MCF 10A (cell line): ENCODE measurements at regions of chr10 and their contacts with region 1.

Region 1: GRCh38 chr10:48656241-48656913 is 28.3 kb upstream of the WDFY4 start:
- DNase-seq: peak; percentile 88
- H3K4me3 Mint-ChIP-seq: peak overlapping the region; percentile 73
- H3K27ac Mint-ChIP-seq: no peak overlapping the region
- H3K4me1 Mint-ChIP-seq: peaks cover 13% of the 10 kb centered on the region
- H3K27me3 Mint-ChIP-seq: peaks cover 58% of the 10 kb centered on the region
- CTCF ChIP-seq: peak; percentile 98

Region 2: DNA sequence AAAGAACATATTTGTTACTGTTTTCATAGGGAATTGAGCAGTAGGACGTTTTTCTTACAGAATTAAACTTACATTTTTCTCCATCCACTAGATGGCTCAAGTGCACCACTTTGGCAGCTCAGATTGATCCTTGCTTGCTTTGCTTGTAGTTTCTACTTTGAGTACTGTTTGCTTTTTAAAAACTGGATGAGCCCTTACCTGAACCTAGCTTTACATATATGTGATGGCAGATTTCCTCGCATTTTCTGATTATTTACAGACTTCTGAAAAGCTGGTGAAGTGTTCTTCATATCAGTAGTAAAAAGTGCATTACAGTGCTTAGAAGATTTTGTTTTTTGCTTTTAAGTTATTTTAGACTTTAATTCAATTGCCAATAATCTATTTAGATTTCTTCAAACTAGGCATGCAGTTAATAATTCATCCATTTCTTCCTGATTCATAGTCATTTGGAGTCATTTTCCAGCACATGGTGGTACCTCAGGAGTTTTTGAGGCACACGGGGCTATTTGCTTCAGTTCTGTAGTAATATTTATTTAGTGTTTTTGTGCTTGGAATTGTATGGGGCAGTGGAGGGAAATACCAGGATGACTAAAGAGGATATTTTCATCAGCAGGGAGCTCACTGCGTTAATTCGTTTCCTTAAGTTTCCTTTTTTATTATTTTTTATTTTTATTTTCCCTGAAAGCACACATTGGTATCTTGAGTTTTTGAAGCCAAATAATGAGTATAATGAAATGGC is 292.6 kb before region 1 on chr10:
- CTCF ChIA-PET with region 1: interaction called, 44 read pairs
- POLR2A ChIA-PET with region 1: interaction called, 7 read pairs
- intact Hi-C with region 1: no loop called
- DNase-seq: peak; percentile 79
- H3K4me3 Mint-ChIP-seq: peak overlapping the region; percentile 2
- H3K27ac Mint-ChIP-seq: no peak overlapping the region
- H3K4me1 Mint-ChIP-seq: peaks cover 23% of the 10 kb centered on the region
- H3K27me3 Mint-ChIP-seq: no peaks in the 10 kb centered on the region
- CTCF ChIP-seq: peak; percentile 72

Region 3: DNA sequence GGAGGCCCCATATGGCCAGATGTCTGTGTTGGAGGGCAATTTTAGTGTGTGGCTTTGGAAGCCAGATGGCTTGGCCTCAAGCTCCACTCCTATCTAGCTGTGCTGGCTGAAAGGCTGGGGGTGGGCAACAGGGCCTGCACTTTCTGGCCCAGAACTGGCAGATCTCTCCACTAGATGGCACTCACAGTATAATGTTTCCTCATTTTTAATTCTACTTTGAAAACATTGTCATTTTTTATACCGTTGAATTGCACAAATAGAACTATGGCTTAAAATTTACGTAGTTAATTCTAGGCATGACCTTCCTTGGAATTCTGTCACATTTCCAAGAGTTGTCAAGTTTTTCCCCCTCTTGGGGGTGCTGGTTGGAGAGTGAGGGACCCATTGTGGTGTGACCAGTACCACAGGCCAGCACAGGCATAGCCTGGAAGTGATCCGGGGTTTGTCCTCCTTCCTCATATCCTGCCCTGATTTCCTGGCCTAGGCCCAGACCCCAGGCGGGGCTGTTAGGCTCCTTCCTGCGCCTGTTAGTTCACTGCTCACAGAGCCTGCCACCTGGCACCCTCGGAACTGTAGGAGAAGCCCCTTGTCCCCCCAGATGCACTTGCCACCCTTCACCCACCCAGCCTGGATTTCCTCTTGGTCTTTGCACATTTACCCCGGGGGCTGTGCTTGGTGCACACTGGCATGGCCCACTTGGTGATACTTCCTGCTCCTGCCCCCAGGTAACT is 104.4 kb before region 1 on chr10:
- CTCF ChIA-PET with region 1: interaction called, 428 read pairs
- POLR2A ChIA-PET with region 1: interaction called, 9 read pairs
- intact Hi-C with region 1: loop called (anchors 1 kb)
- DNase-seq: peak; percentile 53
- H3K4me3 Mint-ChIP-seq: no peak overlapping the region
- H3K27ac Mint-ChIP-seq: no peak overlapping the region
- H3K4me1 Mint-ChIP-seq: no peaks in the 10 kb centered on the region
- H3K27me3 Mint-ChIP-seq: no peaks in the 10 kb centered on the region
- CTCF ChIP-seq: peak; percentile 70

Region 4: GRCh38 chr10:48598243-48598935 is 58.0 kb before region 1 on chr10:
- CTCF ChIA-PET with region 1: interaction called, 21 read pairs
- POLR2A ChIA-PET with region 1: interaction called, 4 read pairs
- intact Hi-C with region 1: no loop called
- DNase-seq: no peak
- H3K4me3 Mint-ChIP-seq: no peak overlapping the region
- H3K27ac Mint-ChIP-seq: peak overlapping the region; percentile 46
- H3K4me1 Mint-ChIP-seq: peaks cover 24% of the 10 kb centered on the region
- H3K27me3 Mint-ChIP-seq: no peaks in the 10 kb centered on the region
- CTCF ChIP-seq: no peak

Region 5: DNA sequence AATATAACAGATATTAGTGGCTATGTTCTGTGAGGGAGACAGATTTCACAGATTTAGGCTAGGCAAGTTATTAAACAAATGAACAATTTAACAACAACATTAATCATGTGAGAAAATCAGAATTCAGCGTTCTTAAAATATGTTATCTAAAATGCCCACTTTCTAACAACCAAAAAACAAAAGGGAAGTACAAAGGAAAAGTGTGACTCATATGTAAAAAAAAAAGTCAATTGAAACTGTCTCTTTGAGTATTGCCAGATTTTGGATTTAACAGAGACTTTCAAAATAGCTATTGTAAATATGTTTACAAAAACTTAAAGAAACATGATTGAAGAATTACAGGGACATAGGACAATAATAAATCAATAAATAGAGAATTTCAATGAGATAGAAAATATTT is 16.7 kb before region 1 on chr10:
- CTCF ChIA-PET with region 1: interaction called, 18 read pairs
- POLR2A ChIA-PET with region 1: no interaction called
- intact Hi-C with region 1: no loop called
- DNase-seq: no peak
- H3K4me3 Mint-ChIP-seq: no peak overlapping the region
- H3K27ac Mint-ChIP-seq: no peak overlapping the region
- H3K4me1 Mint-ChIP-seq: no peaks in the 10 kb centered on the region
- H3K27me3 Mint-ChIP-seq: peaks cover 14% of the 10 kb centered on the region
- CTCF ChIP-seq: no peak

Region 6: GRCh38 chr10:49164559-49165188 is 508.3 kb after region 1 on chr10:
- CTCF ChIA-PET with region 1: interaction called, 11 read pairs
- POLR2A ChIA-PET with region 1: no interaction called
- intact Hi-C with region 1: loop called (anchors 2 kb)
- DNase-seq: peak; percentile 47
- H3K4me3 Mint-ChIP-seq: no peak overlapping the region
- H3K27ac Mint-ChIP-seq: no peak overlapping the region
- H3K4me1 Mint-ChIP-seq: peaks cover 6% of the 10 kb centered on the region
- H3K27me3 Mint-ChIP-seq: peaks cover 23% of the 10 kb centered on the region
- CTCF ChIP-seq: peak; percentile 30